Activated T-helper 1 cell treated with anti-CD3 and anti-CD28 coated beads, Interleukin-12 subunit alpha, Interleukin-12 subunit beta, Interleukin-2, Interleukin-4 antibody, amounts not matched to agents 30 ng/mL and 10 ng/mL and 1 ng/mL, durations not matched to agents 14 hours and 24 hours and 36 hours (primary cell): ENCODE measurements at regions of chr1 and their contacts with region 1.

Region 1: GRCh38 chr1:155172732-155173477 is at the start of gene KRTCAP2:
- DNase-seq: peak; percentile 94
- H3K4me3 Mint-ChIP-seq: peak within 1 kb of the TSS; percentile 96
- H3K27ac Mint-ChIP-seq: peak within 1 kb of the TSS; percentile 97
- H3K4me1 Mint-ChIP-seq: peaks cover 49% of the 10 kb centered on the region
- H3K27me3 Mint-ChIP-seq: no peaks in the 10 kb centered on the region
- total RNA-seq, gene KRTCAP2: 230 and 238 TPM in 2 replicates

Region 2: GRCh38 chr1:155091071-155091709 is 81.7 kb before region 1 on chr1:
- intact Hi-C with region 1: loop called (anchors 1 kb)
- DNase-seq: peak; percentile 69
- H3K4me3 Mint-ChIP-seq: no peak overlapping the region
- H3K27ac Mint-ChIP-seq: no peak overlapping the region
- H3K4me1 Mint-ChIP-seq: peaks cover 7% of the 10 kb centered on the region
- H3K27me3 Mint-ChIP-seq: peaks cover 19% of the 10 kb centered on the region

Region 3: DNA sequence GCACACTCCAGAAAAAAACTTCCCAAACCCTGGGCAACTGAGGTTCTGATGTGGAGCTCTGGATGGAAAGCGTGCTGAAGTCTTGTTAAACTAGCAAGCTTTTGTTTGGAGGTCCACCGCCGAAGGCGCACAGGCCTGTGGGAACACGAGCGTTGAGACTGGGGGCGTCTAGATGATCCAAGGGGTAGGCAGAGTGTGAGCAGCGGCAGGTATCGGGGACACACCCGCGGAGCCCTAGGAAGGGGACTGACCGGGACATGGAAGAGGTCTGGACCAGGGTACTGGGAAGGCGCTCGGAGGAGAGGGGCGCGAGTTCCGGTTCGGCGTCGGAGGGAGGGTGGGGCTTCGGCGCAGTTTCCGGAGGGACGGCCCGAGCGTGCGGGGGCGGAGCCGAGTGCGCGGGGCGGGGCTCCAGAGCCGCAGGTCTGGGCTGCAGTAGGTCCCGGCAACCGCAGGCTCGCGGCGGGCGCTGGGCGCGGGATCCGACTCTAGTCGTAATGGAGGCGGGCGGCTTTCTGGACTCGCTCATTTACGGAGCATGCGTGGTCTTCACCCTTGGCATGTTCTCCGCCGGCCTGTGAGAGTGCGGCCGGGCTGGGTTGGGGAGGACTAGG is 37.4 kb before region 1 on chr1 and contains the start of gene SLC50A1:
- intact Hi-C with region 1: loop called (anchors 1 kb)
- DNase-seq: peak; percentile 91
- H3K4me3 Mint-ChIP-seq: peak within 1 kb of the TSS; percentile 94
- H3K27ac Mint-ChIP-seq: peak within 1 kb of the TSS; percentile 99
- H3K4me1 Mint-ChIP-seq: peaks cover 42% of the 10 kb centered on the region
- H3K27me3 Mint-ChIP-seq: peaks cover 5% of the 10 kb centered on the region
- total RNA-seq, gene SLC50A1: 45.7 and 47.7 TPM in 2 replicates

Region 4: GRCh38 chr1:155193275-155193990 is 20.5 kb after region 1 on chr1:
- intact Hi-C with region 1: loop called (anchors 1 kb)
- DNase-seq: peak; percentile 72
- H3K4me3 Mint-ChIP-seq: peak overlapping the region; percentile 88
- H3K27ac Mint-ChIP-seq: peak overlapping the region; percentile 97
- H3K4me1 Mint-ChIP-seq: peaks cover 39% of the 10 kb centered on the region
- H3K27me3 Mint-ChIP-seq: no peaks in the 10 kb centered on the region

Region 5: DNA sequence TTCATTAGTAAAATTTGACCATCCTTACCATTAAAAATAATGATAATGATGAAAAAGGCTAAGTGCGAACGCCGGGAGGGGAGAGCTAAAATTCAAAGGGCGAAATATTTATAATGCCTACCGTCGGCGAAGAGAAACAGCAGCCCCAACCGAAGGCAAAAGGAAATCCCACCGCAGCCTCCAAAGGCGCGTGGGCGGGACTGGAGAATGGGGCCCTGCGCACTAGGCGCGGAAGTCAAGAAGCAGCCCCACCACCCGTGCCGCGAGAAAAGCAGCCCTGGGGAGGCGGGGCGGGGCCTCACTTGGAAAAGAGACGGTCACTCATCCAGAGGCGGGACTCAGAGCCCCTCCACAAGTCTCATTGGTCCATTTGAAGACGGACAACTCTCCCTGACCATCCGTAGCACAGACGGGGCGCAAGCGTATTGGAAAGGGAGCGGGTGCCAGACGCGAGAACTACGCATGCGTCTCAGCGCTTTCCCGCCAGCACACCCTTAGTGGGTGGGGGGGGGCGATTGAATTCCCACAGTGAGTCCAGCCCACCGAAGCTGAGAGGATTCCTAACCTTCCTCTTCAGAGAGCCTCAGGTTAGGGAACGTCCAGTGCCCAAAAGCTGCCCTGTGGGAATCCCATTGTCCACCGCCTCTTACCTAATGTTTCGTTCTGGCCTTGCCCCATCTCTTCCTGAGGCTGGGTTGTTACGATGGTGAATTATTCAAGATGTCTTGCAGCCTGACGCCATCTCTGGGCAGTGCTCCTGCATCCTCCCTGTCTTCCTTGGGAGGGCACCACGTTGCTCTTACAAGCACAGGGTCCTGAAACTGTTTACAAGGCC is 54.6 kb after region 1 on chr1:
- intact Hi-C with region 1: loop called (anchors 1 kb)
- DNase-seq: peak; percentile 98
- H3K4me3 Mint-ChIP-seq: peak overlapping the region; percentile 95
- H3K27ac Mint-ChIP-seq: peak overlapping the region; percentile 92
- H3K4me1 Mint-ChIP-seq: peaks cover 15% of the 10 kb centered on the region
- H3K27me3 Mint-ChIP-seq: no peaks in the 10 kb centered on the region

Region 6: GRCh38 chr1:155244368-155245162 is 71.7 kb after region 1 on chr1:
- intact Hi-C with region 1: loop called (anchors 1 kb)
- DNase-seq: peak; percentile 95
- H3K4me3 Mint-ChIP-seq: peak overlapping the region; percentile 86
- H3K27ac Mint-ChIP-seq: peak overlapping the region; percentile 100
- H3K4me1 Mint-ChIP-seq: peaks cover 50% of the 10 kb centered on the region
- H3K27me3 Mint-ChIP-seq: peaks cover 2% of the 10 kb centered on the region

Region 7: DNA sequence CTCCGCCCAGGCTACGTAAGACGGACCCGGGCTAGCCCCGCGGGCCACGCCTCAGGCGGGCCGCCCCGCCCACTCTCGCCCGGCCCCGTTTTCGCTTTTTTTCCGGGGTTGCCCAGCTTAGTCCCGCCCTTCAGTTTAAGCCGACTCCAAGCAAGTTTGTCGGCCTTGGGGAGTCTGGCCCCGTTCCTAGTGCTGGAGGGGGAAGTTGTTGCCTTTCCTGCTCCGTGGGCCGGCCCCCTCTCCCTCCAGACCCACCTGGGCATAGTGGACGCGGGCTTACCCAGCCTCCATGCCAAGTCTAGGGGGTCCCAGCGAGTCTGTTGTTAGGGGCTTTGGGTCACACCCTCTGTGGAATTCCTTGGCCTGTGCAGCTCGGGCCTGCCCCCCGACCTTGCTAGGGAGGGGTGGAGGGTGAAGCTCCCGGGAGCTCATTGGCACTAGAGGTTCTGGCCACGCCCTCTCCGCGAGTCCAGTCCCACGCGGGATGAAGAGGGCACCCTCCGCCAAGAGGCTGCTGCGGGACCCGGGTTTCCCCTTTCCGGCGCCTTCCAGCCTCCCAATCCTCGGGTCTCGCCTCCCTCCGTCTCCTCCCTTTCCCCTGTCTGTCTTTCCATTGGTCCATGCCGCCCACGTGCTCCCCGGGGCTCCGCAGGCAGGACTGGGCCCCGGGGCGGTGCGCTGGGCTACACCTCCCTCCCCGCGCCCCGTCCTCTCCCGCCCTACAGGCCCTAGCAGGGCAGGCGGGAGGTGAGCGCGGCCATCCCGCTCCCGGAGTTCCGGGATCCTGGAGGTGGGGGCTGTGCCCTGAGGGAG is 151.1 kb after region 1 on chr1:
- intact Hi-C with region 1: no loop called
- DNase-seq: peak; percentile 90
- H3K4me3 Mint-ChIP-seq: peak overlapping the region; percentile 86
- H3K27ac Mint-ChIP-seq: peak overlapping the region; percentile 75
- H3K4me1 Mint-ChIP-seq: peaks cover 40% of the 10 kb centered on the region
- H3K27me3 Mint-ChIP-seq: no peaks in the 10 kb centered on the region

Region 8: GRCh38 chr1:155744711-155745283 is 571.9 kb after region 1 on chr1:
- intact Hi-C with region 1: loop called (anchors 5 kb)
- DNase-seq: no peak
- H3K4me3 Mint-ChIP-seq: peak overlapping the region; percentile 99
- H3K27ac Mint-ChIP-seq: peak overlapping the region; percentile 95
- H3K4me1 Mint-ChIP-seq: peaks cover 12% of the 10 kb centered on the region
- H3K27me3 Mint-ChIP-seq: no peaks in the 10 kb centered on the region